Colonic mucosa (tissue), 4 donors: ENCODE measurements at regions of chr7 and their contacts with region 1.

Region 1: DNA sequence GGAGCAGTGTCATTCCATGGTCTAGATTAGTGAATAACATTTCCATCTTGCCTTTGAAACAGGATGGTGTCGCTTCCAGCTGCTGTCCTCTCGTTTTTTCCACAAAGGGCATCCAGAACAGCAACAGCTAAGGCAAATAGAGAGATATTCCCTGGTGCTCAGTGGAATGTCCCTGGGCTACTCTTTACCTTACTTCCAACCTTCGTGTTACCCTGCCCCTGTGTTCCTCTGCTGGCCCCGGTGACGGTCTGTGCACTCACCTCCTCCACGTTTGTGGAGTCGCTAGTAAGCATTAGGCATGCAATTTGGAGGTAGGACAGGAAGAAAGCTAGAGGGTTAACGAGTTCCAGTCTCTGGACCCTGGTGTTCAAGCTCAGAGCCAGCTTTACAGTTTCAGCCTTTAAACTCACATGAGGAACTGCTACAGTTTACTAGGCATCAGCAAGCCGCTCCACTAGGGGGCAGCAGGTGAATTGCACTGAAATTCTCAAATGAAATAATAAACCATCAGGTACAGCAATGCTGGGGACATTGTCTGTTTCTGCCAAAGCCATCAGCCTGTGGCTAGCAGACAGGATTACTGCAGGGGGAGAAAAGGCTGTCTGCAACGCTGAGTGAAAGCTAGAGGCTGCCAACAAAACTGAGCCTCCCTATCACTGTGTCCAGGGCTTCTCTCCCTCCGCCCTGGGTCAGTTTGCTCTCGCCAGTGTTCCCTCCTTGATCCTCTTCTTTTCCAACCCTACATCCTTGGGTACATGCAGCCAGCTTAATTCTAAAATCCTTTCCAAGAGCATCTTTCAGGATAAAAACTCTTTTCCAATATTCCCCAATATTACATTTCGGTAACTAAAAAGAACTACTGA is 9.0 kb downstream of the MRPL32 start:
- DNase-seq: peak; percentile 82
- H3K4me3 ChIP-seq: no peak overlapping the region
- H3K27ac ChIP-seq: no peak overlapping the region
- H3K4me1 ChIP-seq: no peaks in the 10 kb centered on the region
- H3K27me3 ChIP-seq: no peaks in the 10 kb centered on the region
- CTCF ChIP-seq: peak; percentile 87

Region 2: GRCh38 chr7:42639929-42640328 is 301.3 kb before region 1 on chr7:
- intact Hi-C with region 1: no loop called
- DNase-seq: no peak
- H3K4me3 ChIP-seq: no peak overlapping the region
- H3K27ac ChIP-seq: no peak overlapping the region
- H3K4me1 ChIP-seq: no peaks in the 10 kb centered on the region
- H3K27me3 ChIP-seq: no peaks in the 10 kb centered on the region
- CTCF ChIP-seq: no peak

Region 3: DNA sequence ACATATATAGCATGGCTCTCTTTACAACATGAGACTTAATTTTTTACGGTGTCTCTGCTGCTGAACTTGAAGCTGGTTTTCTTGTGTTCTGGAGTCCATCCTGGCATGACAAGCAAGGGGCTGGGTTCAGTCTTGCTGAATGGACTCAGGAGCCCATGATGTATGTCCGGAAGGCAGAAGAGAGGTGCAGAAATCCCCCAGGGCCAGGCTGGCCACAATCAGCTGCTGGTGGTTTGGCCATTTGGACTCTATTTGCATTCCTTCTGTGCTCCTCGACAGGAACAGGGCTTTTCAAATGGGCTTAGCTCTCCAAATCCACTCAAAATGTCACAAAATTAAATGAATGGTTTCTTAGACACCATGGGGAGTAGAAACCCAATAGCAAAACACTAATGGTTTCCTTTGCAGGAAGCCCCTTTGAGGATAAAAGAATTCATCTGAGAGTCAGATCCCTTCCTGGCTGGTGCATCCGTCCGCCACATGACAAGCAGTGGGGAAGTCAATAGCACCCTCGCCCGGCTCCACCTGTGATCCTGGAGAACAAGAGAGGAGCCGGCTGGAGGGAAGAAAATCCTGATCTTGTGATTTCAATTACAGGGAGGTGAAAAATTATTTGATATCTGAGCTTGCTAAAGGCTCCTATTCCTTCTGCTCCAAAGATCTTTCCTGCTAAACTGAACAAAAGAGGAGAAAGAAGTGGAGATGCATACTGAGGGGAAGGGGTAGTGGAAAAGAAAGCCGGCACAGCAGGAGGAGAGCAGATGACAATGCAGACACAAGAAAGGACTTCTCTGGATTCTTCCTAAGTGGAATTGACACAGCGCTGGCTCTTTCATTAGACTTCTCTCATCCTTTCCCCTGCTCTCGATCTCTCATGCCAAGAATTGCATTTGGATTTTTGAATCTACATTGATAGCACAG is 220.1 kb before region 1 on chr7:
- intact Hi-C with region 1: no loop called
- DNase-seq: no peak
- H3K4me3 ChIP-seq: no peak overlapping the region
- H3K27ac ChIP-seq: no peak overlapping the region
- H3K4me1 ChIP-seq: no peaks in the 10 kb centered on the region
- H3K27me3 ChIP-seq: no peaks in the 10 kb centered on the region
- CTCF ChIP-seq: no peak

Region 4: GRCh38 chr7:43112941-43113621 is 171.9 kb after region 1 on chr7:
- intact Hi-C with region 1: loop called (anchors 10 kb)
- DNase-seq: no peak
- H3K4me3 ChIP-seq: peak overlapping the region; percentile 22
- H3K27ac ChIP-seq: no peak overlapping the region
- H3K4me1 ChIP-seq: no peaks in the 10 kb centered on the region
- H3K27me3 ChIP-seq: peaks cover 34% of the 10 kb centered on the region
- CTCF ChIP-seq: no peak

Region 5: DNA sequence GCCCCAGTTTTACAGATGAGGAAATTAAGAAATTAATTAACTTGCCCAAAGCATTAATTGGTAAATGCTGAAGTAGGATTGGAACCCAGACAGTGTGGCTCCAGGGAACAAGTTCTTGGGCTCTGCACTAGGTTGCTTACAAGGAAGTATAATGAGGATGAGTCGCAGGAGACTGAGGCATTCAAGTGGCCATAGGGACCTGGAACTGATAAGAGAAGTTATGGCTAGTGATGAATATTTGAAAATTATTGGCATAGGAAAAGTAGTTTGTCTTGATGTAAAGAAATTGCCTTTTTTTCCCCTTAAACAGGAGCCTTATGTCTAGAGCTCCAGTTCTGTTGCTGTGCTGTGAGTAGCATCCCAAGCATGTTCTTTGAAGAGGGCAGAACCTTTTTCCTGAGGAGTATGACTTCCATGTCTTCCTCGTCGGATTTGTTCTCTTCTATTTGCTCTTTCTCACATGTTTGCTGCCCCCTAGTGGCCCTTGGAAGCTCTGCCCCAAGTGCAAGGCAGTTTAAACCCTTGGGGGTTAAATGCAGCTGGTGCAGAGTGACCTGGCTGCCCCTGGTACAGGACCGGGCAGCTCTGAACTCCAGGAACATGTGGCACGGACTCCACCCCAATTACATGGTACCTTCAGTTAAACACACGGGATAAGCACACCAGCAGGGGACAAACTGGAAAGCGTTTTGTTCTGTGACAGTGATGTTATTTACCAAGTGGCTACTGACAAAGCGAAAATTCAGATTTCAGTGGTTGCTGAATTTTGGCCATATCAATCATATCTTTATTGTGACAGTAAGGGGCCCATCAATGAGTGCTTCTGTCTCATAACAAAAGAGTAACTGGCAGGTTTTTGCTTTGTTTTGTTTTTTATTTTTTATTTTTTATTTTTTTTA is 320.0 kb after region 1 on chr7:
- intact Hi-C with region 1: loop called (anchors 2 kb)
- DNase-seq: peak; percentile 71
- H3K4me3 ChIP-seq: no peak overlapping the region
- H3K27ac ChIP-seq: no peak overlapping the region
- H3K4me1 ChIP-seq: no peaks in the 10 kb centered on the region
- H3K27me3 ChIP-seq: no peaks in the 10 kb centered on the region
- CTCF ChIP-seq: peak; percentile 90

Region 6: DNA sequence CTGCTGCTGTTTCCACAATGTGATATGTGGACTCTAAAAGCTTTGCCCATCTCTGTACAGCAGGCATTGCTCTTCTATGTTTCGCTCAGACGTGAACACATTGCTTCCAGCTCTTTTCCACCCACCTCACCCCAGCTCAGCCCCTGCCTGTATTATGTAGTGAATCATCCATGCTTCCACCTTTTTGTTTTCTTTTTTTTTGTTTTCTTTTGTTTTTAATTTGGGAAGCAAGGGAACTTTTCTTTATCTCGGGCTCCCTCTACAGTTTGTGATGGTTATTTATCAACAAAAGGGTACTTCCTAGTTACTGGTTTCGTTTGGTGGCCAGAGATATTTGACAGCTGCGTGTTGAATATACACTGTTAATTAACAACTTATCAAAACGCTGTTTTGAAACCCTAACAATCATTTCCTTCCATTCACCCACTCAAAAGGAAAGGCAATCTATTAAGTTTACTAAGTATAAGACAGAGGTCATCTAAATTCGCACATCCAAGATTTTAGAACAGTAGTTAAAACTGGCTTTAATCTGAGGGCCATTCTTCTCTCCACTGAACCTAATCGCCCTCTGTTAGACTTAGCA is 513.8 kb after region 1 on chr7:
- intact Hi-C with region 1: loop called (anchors 5 kb)
- DNase-seq: no peak
- H3K4me3 ChIP-seq: no peak overlapping the region
- H3K27ac ChIP-seq: no peak overlapping the region
- H3K4me1 ChIP-seq: no peaks in the 10 kb centered on the region
- H3K27me3 ChIP-seq: no peaks in the 10 kb centered on the region
- CTCF ChIP-seq: no peak